Esophagus squamous epithelium (tissue), 5 donors: ENCODE measurements at regions of chr12 and their contacts with region 1.

Region 1: DNA sequence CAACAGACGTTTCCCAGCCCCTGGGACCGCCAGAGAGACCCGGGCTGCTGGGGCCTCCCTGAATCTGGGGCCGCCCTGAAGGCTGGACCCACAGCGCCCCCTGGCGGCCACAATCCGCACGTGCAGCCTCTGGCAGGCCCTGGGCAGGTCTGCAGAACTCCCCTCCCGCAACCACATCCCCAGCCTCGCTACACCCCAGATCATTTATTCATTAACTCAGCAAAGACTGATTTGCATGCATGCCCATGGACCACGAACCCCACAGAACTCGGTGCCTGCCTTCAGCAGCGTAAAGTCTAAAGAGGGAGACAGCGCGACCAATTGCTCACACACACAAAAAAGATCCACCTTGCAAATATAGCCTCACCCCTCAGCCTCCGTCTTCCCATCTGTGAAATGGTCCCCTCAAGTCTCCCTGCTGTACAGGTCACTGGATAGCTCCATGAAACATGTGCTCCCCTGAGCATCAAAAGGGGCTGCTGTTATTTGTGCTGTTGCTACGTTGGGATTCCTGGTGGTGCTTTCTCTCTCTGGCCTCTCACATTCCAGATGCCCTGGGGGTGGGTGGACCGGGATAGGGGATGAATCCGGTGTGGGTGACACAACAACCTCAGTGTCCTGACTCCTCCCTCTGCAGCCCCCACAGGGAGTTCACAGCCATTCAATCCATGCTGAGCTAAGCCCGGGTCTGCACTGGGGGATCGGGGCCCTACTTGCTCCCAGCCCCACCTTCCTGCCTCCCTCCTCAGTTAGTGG is 96.4 kb downstream of the SCARB1 start:
- DNase-seq: peak; percentile 13
- H3K4me3 ChIP-seq: no peak overlapping the region
- H3K27ac ChIP-seq: peak overlapping the region in 2 of 4 donors; percentile 72 to 82
- H3K4me1 ChIP-seq: peaks cover 22 to 63% (median 35%) of the 10 kb centered on the region in 3 donors
- H3K27me3 ChIP-seq: peaks cover 0 to 19% (median 0%) of the 10 kb centered on the region in 4 donors
- CTCF ChIP-seq: peak in 5 of 6 experiments; percentile 98 to 100 (median 99)
- POLR2A ChIP-seq: no peak

Region 2: DNA sequence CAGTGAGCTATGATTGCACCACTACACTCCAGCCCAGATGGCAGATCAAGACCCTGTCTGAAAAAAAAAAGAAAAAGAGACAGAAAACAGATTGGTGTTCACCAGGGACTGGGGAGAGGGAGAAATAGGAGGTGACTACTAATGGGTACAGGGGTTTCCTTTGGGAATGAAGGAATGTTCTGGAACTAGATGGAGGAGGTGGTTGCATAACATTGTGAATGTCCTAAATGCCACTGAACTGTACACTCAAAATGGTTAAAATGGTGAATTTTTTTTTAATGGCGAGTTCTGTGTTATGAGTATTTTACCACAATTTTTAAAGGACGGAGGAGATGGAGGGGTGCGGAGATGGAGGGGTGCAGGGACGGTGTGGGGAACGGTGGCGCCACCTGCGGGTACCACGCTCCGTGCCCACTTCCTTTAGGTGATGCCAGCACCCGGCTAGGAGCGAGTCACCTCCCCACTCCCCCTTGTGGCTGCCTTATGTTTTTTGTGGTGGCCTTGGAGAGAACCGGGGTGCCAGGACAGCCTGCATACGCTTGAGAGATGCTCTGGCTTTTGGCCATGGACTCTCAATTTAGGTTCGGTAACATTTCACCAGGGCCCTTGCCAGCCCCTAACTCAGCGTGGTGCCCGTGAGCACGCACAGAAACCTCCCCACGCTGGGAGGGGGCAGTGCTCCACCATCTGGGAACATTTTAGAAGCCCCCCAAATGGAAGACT is 131.1 kb after region 1 on chr12:
- intact Hi-C with region 1: loop called (anchors 10 kb)
- DNase-seq: no peak
- H3K4me3 ChIP-seq: no peak overlapping the region
- H3K27ac ChIP-seq: peak overlapping the region in 2 of 4 donors; percentile 23 to 42
- H3K4me1 ChIP-seq: peaks cover 0 to 14% (median 7%) of the 10 kb centered on the region in 3 donors
- H3K27me3 ChIP-seq: no peaks in the 10 kb centered on the region
- CTCF ChIP-seq: peak; percentile 16 to 65 (median 52)
- POLR2A ChIP-seq: no peak

Region 3: GRCh38 chr12:125053821-125054220 is 286.6 kb after region 1 on chr12:
- intact Hi-C with region 1: no loop called
- DNase-seq: no peak
- H3K4me3 ChIP-seq: no peak overlapping the region
- H3K27ac ChIP-seq: no peak overlapping the region
- H3K4me1 ChIP-seq: peaks cover 0 to 15% (median 3%) of the 10 kb centered on the region in 3 donors
- H3K27me3 ChIP-seq: peaks cover 0 to 12% (median 0%) of the 10 kb centered on the region in 4 donors
- CTCF ChIP-seq: no peak
- POLR2A ChIP-seq: no peak